Activated B cell treated with CpG ODN at 0.5 μM for 24 hours (primary cell): ENCODE measurements at regions of chr12 and their contacts with region 1.

Region 1: DNA sequence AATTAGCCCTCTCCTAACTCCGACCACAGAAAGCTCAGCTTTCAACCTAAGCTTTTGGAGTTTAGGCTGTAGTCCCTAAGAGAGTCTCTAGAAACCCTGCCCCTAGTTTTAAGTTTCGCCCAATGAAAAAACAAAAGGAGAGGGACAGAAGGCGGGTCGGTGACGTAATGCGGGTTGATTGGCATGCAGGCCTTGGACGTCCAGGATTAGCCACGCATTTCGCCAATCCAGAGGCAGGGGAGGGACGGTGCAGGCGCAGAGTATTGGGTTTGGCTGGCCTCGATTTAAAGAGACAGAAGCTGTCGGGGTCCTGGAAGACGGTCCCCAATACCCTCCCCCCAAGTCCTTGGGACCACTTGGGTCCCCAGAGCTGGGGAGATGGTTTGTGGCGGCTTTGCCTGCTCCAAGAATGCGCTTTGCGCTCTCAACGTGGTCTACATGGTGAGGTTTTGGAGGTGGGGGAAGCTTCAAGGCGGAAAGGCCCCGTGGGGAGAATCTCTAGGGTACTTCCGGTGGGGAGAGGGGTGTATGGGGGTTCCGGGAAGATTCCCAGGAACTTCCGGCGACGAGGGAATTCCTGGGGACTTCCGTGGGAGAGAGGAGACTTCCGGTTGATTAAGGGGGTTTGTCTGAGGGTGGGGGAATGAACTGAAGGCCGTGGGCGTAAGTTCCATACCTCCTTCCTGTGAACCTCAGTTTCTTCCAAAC is at the start of gene TSPAN31:
- DNase-seq: peak; percentile 81
- ATAC-seq: peak; percentile 87
- H3K4me3 Mint-ChIP-seq: peak within 1 kb of the TSS; percentile 86
- H3K27ac Mint-ChIP-seq: peak within 1 kb of the TSS; percentile 89
- H3K4me1 Mint-ChIP-seq: peaks cover 53% of the 10 kb centered on the region
- H3K27me3 Mint-ChIP-seq: no peaks in the 10 kb centered on the region
- CTCF ChIP-seq: no peak
- total RNA-seq, gene TSPAN31: 35.8 and 37.6 TPM in 2 replicates

Region 2: DNA sequence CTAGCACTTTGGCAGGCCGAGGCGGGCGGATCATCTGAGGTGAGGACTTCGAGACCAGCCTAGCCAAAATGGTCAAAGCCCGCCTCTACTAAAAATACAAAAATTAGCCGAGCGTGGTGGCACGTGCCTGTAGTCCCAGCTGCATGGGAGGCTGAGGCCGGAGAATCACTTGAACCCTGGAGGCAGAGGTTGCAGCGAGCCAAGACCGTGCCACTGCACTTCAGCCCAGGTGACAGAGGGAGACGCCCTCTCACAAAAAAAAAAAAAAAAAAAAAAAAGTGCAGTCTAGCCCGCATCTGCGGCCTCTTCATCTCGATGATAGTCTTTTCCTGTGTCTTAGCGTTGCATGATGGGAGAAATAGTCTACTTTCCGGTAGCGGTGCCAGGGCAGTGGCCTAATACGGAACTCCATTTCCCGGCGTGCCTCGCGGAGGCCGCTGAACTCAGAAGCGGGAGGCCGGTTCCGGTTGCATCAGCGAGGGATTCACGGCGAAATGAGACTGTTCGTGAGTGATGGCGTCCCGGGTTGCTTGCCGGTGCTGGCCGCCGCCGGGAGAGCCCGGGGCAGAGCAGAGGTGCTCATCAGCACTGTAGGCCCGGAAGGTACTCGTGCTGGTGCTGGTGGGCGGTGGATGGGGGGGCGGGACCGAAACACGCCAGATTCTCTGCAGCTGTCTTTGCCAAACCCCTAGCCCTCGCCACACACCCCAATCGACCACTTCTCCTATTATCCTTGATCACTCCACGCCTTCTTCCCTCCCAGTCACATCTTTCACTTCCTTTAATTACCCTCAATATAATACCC is 257.1 kb before region 1 on chr12 and contains the start of gene MARS1:
- CTCF ChIA-PET with region 1: no interaction called
- POLR2A ChIA-PET with region 1: interaction called, 4 read pairs
- intact Hi-C with region 1: loop called (anchors 1 kb)
- DNase-seq: peak; percentile 83
- ATAC-seq: peak; percentile 97
- H3K4me3 Mint-ChIP-seq: peak within 1 kb of the TSS; percentile 97
- H3K27ac Mint-ChIP-seq: peak within 1 kb of the TSS; percentile 97
- H3K4me1 Mint-ChIP-seq: peaks cover 41% of the 10 kb centered on the region
- H3K27me3 Mint-ChIP-seq: no peaks in the 10 kb centered on the region
- CTCF ChIP-seq: no peak
- total RNA-seq, gene MARS1: 368 and 425 TPM in 2 replicates

Region 3: GRCh38 chr12:57583008-57583831 is 161.7 kb before region 1 on chr12:
- CTCF ChIA-PET with region 1: interaction called, 8 read pairs
- POLR2A ChIA-PET with region 1: no interaction called
- intact Hi-C with region 1: loop called (anchors 1 kb)
- DNase-seq: peak; percentile 24
- ATAC-seq: peak; percentile 100
- H3K4me3 Mint-ChIP-seq: no peak overlapping the region
- H3K27ac Mint-ChIP-seq: no peak overlapping the region
- H3K4me1 Mint-ChIP-seq: peaks cover 4% of the 10 kb centered on the region
- H3K27me3 Mint-ChIP-seq: peaks cover 12% of the 10 kb centered on the region
- CTCF ChIP-seq: peak; percentile 85

Region 4: GRCh38 chr12:57604454-57604991 is 140.4 kb before region 1 on chr12 and contains the start of gene DTX3:
- CTCF ChIA-PET with region 1: no interaction called
- POLR2A ChIA-PET with region 1: no interaction called
- intact Hi-C with region 1: no loop called
- DNase-seq: no peak
- ATAC-seq: peak; percentile 61
- H3K4me3 Mint-ChIP-seq: peak within 1 kb of the TSS; percentile 79
- H3K27ac Mint-ChIP-seq: no peak within 1 kb of the TSS
- H3K4me1 Mint-ChIP-seq: peaks cover 16% of the 10 kb centered on the region
- H3K27me3 Mint-ChIP-seq: peaks cover 34% of the 10 kb centered on the region
- CTCF ChIP-seq: no peak
- total RNA-seq, gene DTX3: 3.7 and 3.9 TPM in 2 replicates

Region 5: DNA sequence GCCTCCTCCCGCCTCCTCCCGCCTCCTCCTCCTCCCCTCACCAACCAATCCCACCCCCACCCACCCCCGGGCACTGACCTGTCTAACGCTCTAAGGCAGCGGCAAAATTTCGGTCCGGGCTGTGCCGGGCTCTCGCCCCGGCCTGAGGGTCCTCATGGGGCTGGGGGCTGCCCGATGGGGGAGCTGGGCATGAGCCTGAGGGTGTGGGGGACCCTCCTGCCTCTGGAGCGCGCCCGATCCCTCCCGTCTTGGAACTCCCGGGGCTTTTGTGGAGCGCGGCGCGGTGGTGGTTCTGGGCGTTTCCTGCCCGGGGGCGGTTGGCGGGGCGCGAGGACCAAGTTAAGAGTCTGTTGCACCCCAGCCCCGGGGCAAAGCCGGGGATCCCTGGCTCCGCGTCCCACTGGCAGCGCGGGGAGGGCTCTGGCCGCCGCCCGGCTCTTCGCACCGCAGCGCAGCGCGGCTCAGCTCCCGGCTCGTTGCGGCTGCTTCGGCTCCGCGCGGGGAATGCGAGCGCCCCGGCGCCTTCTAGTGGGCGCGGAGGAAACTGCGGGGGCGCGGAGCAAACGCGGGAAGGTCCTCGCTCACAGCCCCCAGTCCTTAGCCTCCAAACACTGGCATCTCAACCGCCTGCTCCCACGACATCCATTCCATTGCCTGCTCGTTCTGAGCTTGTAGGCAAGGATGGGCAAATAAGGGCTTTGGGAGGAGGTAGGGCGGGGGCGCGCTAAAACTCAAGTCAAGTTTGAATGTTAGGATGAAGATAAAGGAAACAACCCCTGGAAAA is 112.0 kb before region 1 on chr12 and contains the start of gene B4GALNT1:
- CTCF ChIA-PET with region 1: interaction called, 3 read pairs
- POLR2A ChIA-PET with region 1: no interaction called
- intact Hi-C with region 1: loop called (anchors 2 kb)
- DNase-seq: peak; percentile 75
- ATAC-seq: peak; percentile 94
- H3K4me3 Mint-ChIP-seq: peak within 1 kb of the TSS; percentile 73
- H3K27ac Mint-ChIP-seq: no peak within 1 kb of the TSS
- H3K4me1 Mint-ChIP-seq: peaks cover 12% of the 10 kb centered on the region
- H3K27me3 Mint-ChIP-seq: peaks cover 46% of the 10 kb centered on the region
- CTCF ChIP-seq: peak; percentile 27
- total RNA-seq, gene B4GALNT1: 0.31 and 0.51 TPM in 2 replicates

Region 6: GRCh38 chr12:57693659-57694458 is 51.1 kb before region 1 on chr12 and contains the start of gene OS9:
- CTCF ChIA-PET with region 1: interaction called, 3 read pairs
- POLR2A ChIA-PET with region 1: interaction called, 4 read pairs
- intact Hi-C with region 1: loop called (anchors 1 kb)
- DNase-seq: peak; percentile 73
- ATAC-seq: peak; percentile 91
- H3K4me3 Mint-ChIP-seq: no peak within 1 kb of the TSS
- H3K27ac Mint-ChIP-seq: no peak within 1 kb of the TSS
- H3K4me1 Mint-ChIP-seq: peaks cover 2% of the 10 kb centered on the region
- H3K27me3 Mint-ChIP-seq: peaks cover 8% of the 10 kb centered on the region
- CTCF ChIP-seq: no peak
- total RNA-seq, gene OS9: 166 TPM in 2 replicates

Region 7: DNA sequence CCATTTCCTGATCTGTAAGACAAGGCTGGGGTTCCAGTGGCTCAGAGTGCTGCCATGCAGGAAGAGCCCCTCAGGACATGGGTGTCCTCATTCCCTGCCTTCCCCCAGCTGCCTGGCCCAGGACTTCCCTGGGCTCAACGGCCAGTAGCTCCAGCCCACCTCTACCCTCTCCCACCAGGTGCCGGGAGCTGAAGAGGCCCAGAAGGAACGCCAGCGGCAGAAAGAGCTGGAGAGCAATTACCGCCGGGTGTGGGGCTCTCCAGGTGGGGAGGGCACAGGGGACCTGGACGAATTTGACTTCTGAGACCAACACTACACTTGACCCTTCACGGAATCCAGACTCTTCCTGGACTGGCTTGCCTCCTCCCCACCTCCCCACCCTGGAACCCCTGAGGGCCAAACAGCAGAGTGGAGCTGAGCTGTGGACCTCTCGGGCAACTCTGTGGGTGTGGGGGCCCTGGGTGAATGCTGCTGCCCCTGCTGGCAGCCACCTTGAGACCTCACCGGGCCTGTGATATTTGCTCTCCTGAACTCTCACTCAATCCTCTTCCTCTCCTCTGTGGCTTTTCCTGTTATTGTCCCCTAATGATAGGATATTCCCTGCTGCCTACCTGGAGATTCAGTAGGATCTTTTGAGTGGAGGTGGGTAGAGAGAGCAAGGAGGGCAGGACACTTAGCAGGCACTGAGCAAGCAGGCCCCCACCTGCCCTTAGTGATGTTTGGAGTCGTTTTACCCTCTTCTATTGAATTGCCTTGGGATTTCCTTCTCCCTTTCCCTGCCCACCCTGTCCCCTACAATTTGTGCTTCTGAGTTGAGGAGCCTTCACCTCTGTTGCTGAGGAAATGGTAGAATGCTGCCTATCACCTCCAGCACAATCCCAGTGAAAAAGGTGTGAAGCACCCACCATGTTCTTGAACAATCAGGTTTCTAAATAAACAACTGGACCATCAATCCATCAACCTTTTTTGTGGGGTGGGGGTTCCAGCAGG is 24.0 kb before region 1 on chr12:
- CTCF ChIA-PET with region 1: no interaction called
- POLR2A ChIA-PET with region 1: interaction called, 3 read pairs
- intact Hi-C with region 1: loop called (anchors 2 kb)
- DNase-seq: no peak
- ATAC-seq: no peak
- H3K4me3 Mint-ChIP-seq: no peak overlapping the region
- H3K27ac Mint-ChIP-seq: no peak overlapping the region
- H3K4me1 Mint-ChIP-seq: peaks cover 15% of the 10 kb centered on the region
- H3K27me3 Mint-ChIP-seq: no peaks in the 10 kb centered on the region
- CTCF ChIP-seq: no peak

Region 8: GRCh38 chr12:57771708-57772428 is 26.9 kb after region 1 on chr12 and contains the start of gene METTL1:
- CTCF ChIA-PET with region 1: no interaction called
- POLR2A ChIA-PET with region 1: no interaction called
- intact Hi-C with region 1: loop called (anchors 1 kb)
- DNase-seq: peak; percentile 81
- ATAC-seq: peak; percentile 91
- H3K4me3 Mint-ChIP-seq: peak within 1 kb of the TSS; percentile 98
- H3K27ac Mint-ChIP-seq: peak within 1 kb of the TSS; percentile 98
- H3K4me1 Mint-ChIP-seq: peaks cover 20% of the 10 kb centered on the region
- H3K27me3 Mint-ChIP-seq: peaks cover under 1% of the 10 kb centered on the region
- CTCF ChIP-seq: no peak
- total RNA-seq, gene METTL1: 32.2 and 40.7 TPM in 2 replicates